CD8-positive, alpha-beta T cell (primary cell): ENCODE measurements at regions of chr6 and their contacts with region 1.

Region 1: GRCh38 chr6:100851819-100852218 is 29.3 kb downstream of the ASCC3 start:
- DNase-seq: no peak
- ATAC-seq: no peak
- H3K4me3 ChIP-seq: no peak overlapping the region
- H3K4me3 Mint-ChIP-seq: no peak overlapping the region
- H3K27ac ChIP-seq: no peak overlapping the region
- H3K27ac Mint-ChIP-seq: no peak overlapping the region
- H3K4me1 ChIP-seq: no peaks in the 10 kb centered on the region
- H3K4me1 Mint-ChIP-seq: peaks cover 16% of the 10 kb centered on the region
- H3K27me3 ChIP-seq: no peaks in the 10 kb centered on the region
- H3K27me3 Mint-ChIP-seq: no peaks in the 10 kb centered on the region
- CTCF ChIP-seq: no peak

Region 2: DNA sequence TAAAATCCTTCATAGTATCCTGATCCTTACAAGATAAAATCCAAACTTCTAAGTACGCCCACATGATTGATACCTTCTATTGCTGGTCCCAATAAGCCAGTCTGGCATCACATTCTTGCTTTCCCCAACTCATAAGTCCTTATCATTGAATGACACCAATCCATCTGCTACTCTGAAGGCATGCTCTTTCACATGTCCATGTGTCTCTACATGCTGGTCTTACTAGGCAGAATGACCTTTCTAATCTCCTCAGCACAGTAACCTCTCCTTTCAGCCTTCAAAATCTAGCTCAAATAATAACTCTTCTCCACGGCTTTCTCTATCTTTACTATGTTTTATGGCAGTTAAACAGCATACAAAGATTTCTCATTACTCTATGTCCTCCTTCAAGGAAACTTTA is 41.8 kb before region 1 on chr6:
- CTCF ChIA-PET with region 1: no interaction called
- POLR2A ChIA-PET with region 1: no interaction called
- intact Hi-C with region 1: loop called in 1 of 2 experiments (anchors 5 kb)
- DNase-seq: no peak
- ATAC-seq: no peak
- H3K4me3 ChIP-seq: no peak overlapping the region
- H3K4me3 Mint-ChIP-seq: no peak overlapping the region
- H3K27ac ChIP-seq: no peak overlapping the region
- H3K27ac Mint-ChIP-seq: no peak overlapping the region
- H3K4me1 ChIP-seq: no peaks in the 10 kb centered on the region
- H3K4me1 Mint-ChIP-seq: peaks cover 40% of the 10 kb centered on the region
- H3K27me3 ChIP-seq: no peaks in the 10 kb centered on the region
- H3K27me3 Mint-ChIP-seq: no peaks in the 10 kb centered on the region
- CTCF ChIP-seq: no peak

Region 3: GRCh38 chr6:100880853-100881706 is 29.3 kb after region 1 on chr6 and contains the start of gene ASCC3:
- CTCF ChIA-PET with region 1: no interaction called
- POLR2A ChIA-PET with region 1: interaction called, 3 read pairs
- intact Hi-C with region 1: loop called in 1 of 2 experiments (anchors 2 kb)
- DNase-seq: peak; percentile 68 to 93 (median 88)
- ATAC-seq: peak; percentile 94
- H3K4me3 ChIP-seq: peak within 1 kb of the TSS; percentile 93 to 95
- H3K4me3 Mint-ChIP-seq: peak within 1 kb of the TSS; percentile 99
- H3K27ac ChIP-seq: peak within 1 kb of the TSS; percentile 93 to 94
- H3K27ac Mint-ChIP-seq: peak within 1 kb of the TSS; percentile 99
- H3K4me1 ChIP-seq: peaks cover 28% of the 10 kb centered on the region
- H3K4me1 Mint-ChIP-seq: peaks cover 50% of the 10 kb centered on the region
- H3K27me3 ChIP-seq: no peaks in the 10 kb centered on the region
- H3K27me3 Mint-ChIP-seq: no peaks in the 10 kb centered on the region
- CTCF ChIP-seq: no peak
- total RNA-seq, gene ASCC3: 30.0 to 30.5 TPM